Heart left ventricle (tissue), 16 donors: ENCODE measurements at regions of chr7 and their contacts with region 1.

Region 1: GRCh38 chr7:21945454-21946227 is at the start of gene CDCA7L:
- DNase-seq: peak; percentile 69 to 87 (median 85)
- ATAC-seq: peak; percentile 83 to 96 (median 94)
- H3K4me3 ChIP-seq: peak within 1 kb of the TSS; percentile 34 to 78 (median 70)
- H3K27ac ChIP-seq: peak within 1 kb of the TSS; percentile 6 to 92 (median 87)
- H3K4me1 ChIP-seq: peaks cover 0 to 45% (median 17%) of the 10 kb centered on the region in 12 donors
- H3K27me3 ChIP-seq: no peaks in the 10 kb centered on the region
- CTCF ChIP-seq: no peak
- POLR2A ChIP-seq: peak in 1 of 2 donors; percentile 54
- total RNA-seq, gene CDCA7L: 20.2 to 53.4 (median 45.5) TPM

Region 2: DNA sequence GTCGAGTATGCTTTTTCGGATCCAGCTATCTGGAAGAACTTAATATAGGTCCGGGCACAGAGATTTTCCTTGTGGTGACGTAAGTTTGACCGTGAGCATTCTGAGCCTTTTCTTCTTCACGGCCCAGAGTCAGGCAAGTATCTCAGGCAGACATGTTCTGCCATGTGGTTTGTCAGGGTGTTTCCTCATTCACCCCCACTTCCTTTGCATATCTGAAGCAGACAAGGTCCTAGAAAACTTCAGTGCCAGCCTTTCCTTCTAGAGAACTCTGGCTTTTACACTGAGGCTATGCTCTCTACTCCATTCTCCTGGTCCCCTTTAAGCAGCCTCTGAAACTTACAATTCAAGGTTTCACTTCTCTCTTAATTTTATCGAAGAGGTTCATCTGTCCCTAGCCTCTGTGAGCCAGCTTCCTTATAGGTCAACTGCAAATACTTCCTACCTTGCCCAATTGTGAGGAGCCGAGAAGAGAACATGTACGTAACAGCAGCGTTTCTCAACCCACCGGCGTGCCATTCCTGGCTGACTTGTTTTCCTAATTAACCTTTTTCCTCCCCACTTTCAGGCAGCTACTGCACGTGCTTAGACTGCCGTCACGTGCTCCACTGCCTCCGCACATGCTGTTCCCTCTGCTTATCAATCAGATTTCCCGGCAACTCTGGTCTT is 47.2 kb before region 1 on chr7:
- intact Hi-C with region 1: loop called in 1 of 10 experiments (anchors 10 kb)
- DNase-seq: no peak
- ATAC-seq: peak in 3 of 4 donors; percentile 48 to 72 (median 63)
- H3K4me3 ChIP-seq: peak overlapping the region in 1 of 12 donors; percentile 27
- H3K27ac ChIP-seq: peak overlapping the region in 2 of 12 donors; percentile 38 to 71
- H3K4me1 ChIP-seq: peaks cover 0 to 20% (median 0%) of the 10 kb centered on the region in 12 donors
- H3K27me3 ChIP-seq: no peaks in the 10 kb centered on the region
- CTCF ChIP-seq: no peak
- POLR2A ChIP-seq: no peak

Region 3: DNA sequence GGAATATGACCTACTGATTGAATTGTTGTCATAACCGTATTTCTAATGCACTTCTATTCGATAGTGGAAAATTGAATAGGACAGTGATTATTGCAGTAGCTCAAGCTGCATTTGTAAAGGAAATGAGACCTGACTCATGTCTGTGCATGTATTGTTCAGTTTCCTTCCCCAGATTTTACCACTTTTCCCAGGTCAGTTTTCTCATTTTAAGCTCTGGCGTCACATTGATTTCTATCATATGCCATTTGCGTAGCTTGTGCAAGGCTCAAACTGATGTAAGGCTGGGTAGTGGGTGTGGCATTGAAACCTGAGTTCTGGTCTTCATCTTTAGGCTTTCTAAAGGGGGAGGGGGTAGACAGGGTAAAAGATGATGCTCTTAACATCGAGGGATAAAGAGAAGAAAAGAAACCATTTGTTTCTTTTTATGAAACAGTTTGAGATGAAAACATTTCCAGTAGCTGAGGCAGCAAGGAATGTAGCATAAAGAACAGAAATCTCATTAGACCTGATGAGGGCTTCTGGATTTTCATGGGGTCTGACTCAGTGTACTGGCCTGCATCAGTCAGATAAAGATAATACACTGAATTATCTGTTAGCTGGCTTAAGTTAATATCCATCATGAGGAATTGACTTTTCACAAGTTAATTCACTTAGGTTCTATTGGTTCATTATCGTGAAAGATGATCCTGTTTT is 182.3 kb after region 1 on chr7:
- intact Hi-C with region 1: no loop called
- DNase-seq: no peak
- ATAC-seq: peak in 2 of 4 donors; percentile 47 to 71
- H3K4me3 ChIP-seq: no peak overlapping the region
- H3K27ac ChIP-seq: peak overlapping the region in 11 of 12 donors; percentile 6 to 80 (median 58)
- H3K4me1 ChIP-seq: peaks cover 0 to 35% (median 12%) of the 10 kb centered on the region in 12 donors
- H3K27me3 ChIP-seq: no peaks in the 10 kb centered on the region
- CTCF ChIP-seq: no peak
- POLR2A ChIP-seq: no peak